ENCODE measurements at regions of chr11 and their contacts with region 1.

Region 1: DNA sequence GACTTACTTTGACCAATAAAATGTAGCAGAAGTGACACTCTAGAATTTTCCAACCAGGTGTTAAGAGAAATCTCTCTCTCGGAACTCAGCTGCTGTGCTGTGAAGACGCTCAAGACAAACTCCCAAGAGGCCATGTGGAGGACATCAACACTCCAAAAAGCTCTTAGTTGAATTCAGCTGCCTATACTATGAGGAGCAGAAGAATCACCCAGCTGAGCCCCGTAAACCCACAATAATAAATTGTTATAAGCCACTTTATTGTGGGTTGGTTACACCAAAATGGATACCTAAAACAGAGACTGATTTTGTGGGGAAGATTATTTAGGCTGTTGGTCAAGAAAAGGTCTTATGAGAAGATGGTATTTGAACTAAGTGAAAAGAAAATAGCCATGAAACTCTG is 44.1 kb upstream of the FSHB start:
- DNase-seq: no peak
- H3K4me3 ChIP-seq: no peak overlapping the region
- CTCF ChIP-seq: no peak
- POLR2A ChIP-seq: no peak

Region 2: GRCh38 chr11:31817054-31817620 is 1630.4 kb after region 1 on chr11:
- intact Hi-C with region 1: loop called (anchors 5 kb)
- DNase-seq: no peak
- H3K4me3 ChIP-seq: no peak overlapping the region
- CTCF ChIP-seq: no peak
- POLR2A ChIP-seq: no peak